Right cardiac atrium (tissue), 5 donors: ENCODE measurements at regions of chr10 and their contacts with region 1.

Region 1: DNA sequence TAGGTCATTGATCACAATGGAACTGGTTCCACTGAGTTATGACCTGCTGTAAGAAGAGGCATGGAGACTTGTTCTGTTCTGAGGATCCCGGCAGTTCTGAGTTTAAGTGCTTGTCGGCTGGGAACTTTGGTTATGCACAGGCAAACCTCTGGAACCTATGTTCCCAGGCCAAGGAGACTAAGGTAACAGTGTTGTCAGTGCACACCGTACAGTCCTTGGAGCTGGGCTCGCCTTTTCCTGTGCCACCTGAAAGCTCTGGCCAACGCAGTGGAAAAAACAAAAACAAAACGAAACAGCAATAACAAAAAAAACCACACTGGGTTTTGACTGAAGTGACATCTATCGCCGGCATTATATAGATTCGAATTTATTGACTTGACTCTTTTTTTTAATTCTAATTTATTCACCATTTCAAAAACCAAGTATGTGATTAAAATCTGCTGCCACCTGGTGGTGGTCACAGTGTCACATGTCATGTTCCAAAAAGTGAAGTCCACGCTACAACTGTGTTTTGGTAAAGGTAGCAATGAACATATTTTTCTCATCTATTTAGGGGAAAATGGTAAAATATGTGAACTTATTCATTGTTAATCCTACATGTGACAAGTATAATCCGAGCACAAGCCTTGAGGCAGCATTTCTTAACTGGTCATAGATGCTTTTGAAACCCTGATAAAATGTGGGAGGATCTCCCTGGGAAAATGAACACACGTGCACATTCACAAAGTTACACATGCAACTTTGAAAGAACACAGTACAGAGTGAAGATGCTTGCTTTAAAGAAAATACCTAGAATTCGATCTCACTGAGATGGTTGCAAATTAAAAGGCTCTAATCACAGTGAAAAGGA is 113.8 kb upstream of the PPP2R2D start:
- DNase-seq: no peak
- ATAC-seq: no peak
- H3K4me3 ChIP-seq: no peak overlapping the region
- H3K27ac ChIP-seq: no peak overlapping the region
- H3K4me1 ChIP-seq: no peaks in the 10 kb centered on the region
- H3K27me3 ChIP-seq: peaks cover 2% of the 10 kb centered on the region

Region 2: DNA sequence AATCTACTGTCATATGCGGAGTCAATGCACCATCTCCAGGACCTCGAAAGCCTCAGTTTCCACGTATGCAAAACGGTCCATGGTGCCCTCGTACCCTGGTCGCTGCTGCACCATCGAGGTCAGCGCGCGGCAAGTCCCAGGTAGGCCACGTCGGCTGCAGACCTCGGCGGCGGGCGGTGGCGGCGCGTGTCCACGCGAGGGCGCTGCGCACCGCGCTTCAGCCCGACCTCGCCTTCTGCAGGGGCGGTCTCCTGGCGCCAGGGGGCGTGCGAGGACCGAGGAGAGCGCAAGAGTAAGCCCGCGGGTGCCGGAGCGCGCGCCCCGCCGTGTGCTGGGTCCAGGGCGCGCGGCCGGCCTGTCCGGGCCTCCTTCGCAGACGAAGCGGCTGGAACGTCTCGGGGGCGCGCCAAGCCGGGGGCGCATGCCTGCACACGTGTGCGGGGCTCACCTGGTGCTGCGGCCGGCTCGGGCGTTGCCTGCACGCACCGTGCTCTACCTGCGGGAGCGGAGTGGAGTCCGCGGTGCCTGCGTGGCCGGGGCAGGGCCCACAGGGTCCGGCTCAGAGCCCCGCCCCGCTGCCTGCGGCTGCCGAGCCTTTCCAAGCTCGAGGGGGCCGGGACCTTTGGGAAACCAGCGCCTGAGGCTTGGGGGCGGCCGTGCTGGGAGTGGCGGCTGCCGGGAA is 1596.8 kb before region 1 on chr10:
- intact Hi-C with region 1: loop called in 2 of 4 experiments (anchors 5 to 10 kb)
- DNase-seq: peak; percentile 90 to 96 (median 96)
- ATAC-seq: peak; percentile 92 to 93
- H3K4me3 ChIP-seq: peak overlapping the region; percentile 47
- H3K27ac ChIP-seq: no peak overlapping the region
- H3K4me1 ChIP-seq: no peaks in the 10 kb centered on the region
- H3K27me3 ChIP-seq: no peaks in the 10 kb centered on the region

Region 3: DNA sequence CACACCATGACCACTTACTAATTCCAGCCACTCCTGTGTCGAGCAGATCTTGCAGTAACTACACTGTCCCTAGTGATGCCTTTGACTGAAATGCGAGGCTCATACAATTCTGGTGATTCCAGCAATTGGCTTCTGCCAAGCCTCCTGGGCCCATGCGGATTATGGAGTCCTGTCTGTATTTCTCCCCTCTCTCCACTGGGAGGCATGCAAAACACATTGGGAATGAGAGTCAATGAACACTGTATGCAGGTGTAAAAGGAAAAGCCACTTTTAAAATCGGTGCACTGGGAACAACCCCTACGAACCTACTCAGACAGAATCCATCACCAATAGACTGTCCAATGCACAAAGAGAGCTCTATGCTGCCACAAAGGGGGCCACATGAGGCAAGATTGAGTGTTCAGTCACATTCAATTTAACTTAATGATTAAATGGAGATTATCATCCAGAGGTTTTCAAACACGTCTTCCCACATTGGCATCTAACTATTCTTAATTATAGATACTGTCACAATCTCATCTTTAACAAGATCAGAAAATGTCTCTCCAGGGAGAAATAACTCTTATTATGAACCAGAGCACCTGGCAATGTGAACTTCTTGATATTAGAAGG is 1100.2 kb before region 1 on chr10:
- intact Hi-C with region 1: loop called in 1 of 4 experiments (anchors 10 kb)
- DNase-seq: no peak
- ATAC-seq: no peak
- H3K4me3 ChIP-seq: no peak overlapping the region
- H3K27ac ChIP-seq: no peak overlapping the region
- H3K4me1 ChIP-seq: no peaks in the 10 kb centered on the region
- H3K27me3 ChIP-seq: no peaks in the 10 kb centered on the region

Region 4: GRCh38 chr10:131453594-131454355 is 333.2 kb before region 1 on chr10:
- intact Hi-C with region 1: loop called in 1 of 4 experiments (anchors 10 kb)
- DNase-seq: peak; percentile 70 to 91 (median 85)
- ATAC-seq: peak; percentile 75 to 78
- H3K4me3 ChIP-seq: no peak overlapping the region
- H3K27ac ChIP-seq: no peak overlapping the region
- H3K4me1 ChIP-seq: no peaks in the 10 kb centered on the region
- H3K27me3 ChIP-seq: no peaks in the 10 kb centered on the region

Region 5: DNA sequence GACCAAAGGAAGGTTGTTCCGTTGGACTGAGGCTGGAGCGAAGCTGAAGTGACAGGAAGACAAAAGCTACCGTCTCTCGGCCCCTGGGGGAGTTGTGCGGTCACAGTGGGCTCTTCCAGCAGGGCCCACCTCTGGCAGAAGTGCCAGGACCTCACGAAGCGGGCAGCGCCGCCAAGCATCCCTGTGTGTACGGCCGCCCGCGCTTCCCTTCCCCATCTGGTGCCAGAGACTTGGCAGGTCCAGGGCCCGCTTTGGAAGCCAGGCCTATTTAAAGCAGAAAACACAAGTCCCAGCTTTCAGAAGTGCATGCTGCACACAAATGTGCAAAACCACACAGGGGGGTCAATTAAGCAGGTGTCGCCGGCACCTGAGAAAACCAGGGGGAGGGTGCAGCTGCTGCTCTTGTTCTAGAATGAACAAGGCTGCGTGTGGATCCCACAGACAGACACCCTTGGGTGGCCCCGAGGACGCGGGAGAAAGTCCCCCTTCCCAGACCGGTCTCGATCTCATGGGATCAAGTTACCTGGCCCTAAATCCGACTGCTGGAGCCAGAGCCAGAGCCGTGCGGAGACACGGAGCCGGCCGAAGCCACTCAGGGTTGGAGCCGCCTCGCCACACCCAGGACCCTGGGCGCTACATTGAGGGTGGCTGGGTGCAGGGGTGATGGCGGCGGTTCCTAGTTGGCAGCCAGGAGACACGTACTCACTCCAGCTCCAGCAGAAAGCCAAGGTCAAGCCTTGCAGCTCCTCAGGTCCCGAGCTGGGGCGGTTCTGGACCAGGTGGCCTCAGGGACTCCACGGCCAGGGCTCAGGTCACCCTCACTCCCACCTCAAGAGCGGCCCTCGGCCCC is 62.0 kb after region 1 on chr10:
- intact Hi-C with region 1: no loop called
- DNase-seq: no peak
- ATAC-seq: no peak
- H3K4me3 ChIP-seq: no peak overlapping the region
- H3K27ac ChIP-seq: no peak overlapping the region
- H3K4me1 ChIP-seq: no peaks in the 10 kb centered on the region
- H3K27me3 ChIP-seq: no peaks in the 10 kb centered on the region

Region 6: DNA sequence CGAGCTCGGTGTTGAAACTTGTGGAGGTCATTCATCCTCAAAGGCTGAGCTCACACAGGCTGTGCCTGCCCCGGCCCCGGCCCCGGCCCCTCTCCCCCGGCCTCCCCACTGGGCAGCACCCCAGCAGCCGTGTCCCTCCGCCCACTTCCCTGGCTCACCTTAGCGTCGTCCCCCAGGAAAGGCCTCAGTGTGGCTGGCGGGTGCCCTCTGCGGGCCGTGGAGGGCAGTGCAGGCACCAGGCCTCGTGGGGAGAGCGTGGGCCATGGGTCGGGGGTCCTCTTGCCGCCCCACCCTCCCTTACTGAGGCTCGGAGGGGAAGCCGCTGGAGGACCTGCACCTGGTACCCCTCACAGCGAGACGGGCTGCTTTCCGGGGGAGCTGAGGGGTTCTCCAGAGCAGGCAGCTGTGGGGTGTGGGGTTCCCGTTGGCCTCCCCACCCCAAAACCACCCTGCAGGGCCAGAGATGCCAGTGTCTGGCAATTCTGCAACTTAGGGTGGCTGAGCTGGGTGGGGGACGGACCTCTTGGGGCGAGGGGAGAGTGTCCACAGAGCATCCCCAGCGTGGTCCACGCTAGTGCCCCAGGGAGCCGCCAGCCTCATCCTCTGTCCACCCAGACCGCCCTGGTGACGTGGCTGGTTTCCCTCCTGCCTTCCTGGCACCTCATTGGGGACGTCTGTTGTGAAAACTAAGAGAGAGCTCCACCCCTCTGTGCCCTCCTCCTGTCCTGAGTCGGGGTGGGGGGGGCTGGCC is 355.6 kb after region 1 on chr10:
- intact Hi-C with region 1: no loop called
- DNase-seq: peak; percentile 42 to 80 (median 79)
- ATAC-seq: peak; percentile 58 to 71
- H3K4me3 ChIP-seq: no peak overlapping the region
- H3K27ac ChIP-seq: no peak overlapping the region
- H3K4me1 ChIP-seq: no peaks in the 10 kb centered on the region
- H3K27me3 ChIP-seq: no peaks in the 10 kb centered on the region